Body of pancreas (tissue), 4 donors: ENCODE measurements at regions of chr7 and their contacts with region 1.

Region 1: GRCh38 chr7:102279537-102280400 is 6.9 kb upstream of the SH2B2 start:
- DNase-seq: peak; percentile 41 to 60 (median 47)
- ATAC-seq: peak; percentile 58
- H3K4me3 ChIP-seq: no peak overlapping the region
- H3K27ac ChIP-seq: no peak overlapping the region
- H3K4me1 ChIP-seq: no peaks in the 10 kb centered on the region
- H3K27me3 ChIP-seq: no peaks in the 10 kb centered on the region
- CTCF ChIP-seq: peak; percentile 45 to 78 (median 71)
- POLR2A ChIP-seq: no peak

Region 2: DNA sequence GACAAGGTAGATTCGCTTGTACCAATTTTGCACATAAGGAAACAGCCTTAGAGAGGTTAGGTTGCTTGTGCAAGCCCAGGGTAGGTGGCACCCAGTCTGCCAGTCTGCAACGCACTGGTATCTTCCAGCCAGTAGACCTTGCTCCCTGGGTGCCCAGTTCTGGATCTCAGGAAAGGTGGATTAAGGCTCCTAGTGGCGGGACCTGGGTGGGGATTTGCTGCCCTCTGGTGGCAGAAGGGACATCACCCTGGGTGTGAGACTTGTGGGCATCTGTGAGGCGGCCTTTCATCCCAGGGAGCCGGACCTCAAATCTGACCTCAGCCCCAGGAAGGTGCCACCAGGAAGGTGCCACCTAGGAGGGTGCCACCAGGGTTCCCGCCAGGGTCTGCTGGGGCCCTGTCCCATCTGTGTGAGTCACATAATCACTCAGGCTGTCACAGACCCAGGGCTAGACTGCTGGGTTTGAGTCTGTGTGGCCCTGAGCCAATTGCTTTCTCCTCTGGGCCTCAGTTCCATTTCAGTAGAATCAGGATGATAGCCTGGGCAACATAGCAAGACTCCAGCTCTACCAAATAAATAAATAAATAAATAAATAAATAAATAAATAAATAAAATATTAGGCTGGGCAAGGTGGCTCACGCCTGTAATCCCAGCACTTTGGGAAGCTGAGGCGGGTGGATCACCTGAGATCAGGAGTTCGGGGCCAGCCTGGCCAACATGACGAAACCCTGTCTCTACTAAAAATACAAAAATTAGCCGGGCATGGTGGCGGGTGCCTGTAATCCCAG is 111.1 kb after region 1 on chr7:
- intact Hi-C with region 1: loop called (anchors 5 kb)
- DNase-seq: peak; percentile 86 to 91 (median 88)
- ATAC-seq: peak; percentile 91
- H3K4me3 ChIP-seq: no peak overlapping the region
- H3K27ac ChIP-seq: no peak overlapping the region
- H3K4me1 ChIP-seq: peaks cover 7% of the 10 kb centered on the region
- H3K27me3 ChIP-seq: no peaks in the 10 kb centered on the region
- CTCF ChIP-seq: peak; percentile 85 to 95 (median 94)
- POLR2A ChIP-seq: no peak